ENCODE measurements at regions of chr17 and their contacts with region 1.

Region 1: GRCh38 chr17:50547035-50547735 is at the start of gene SPATA20:
- DNase-seq: peak; percentile 89 to 93
- ATAC-seq: peak; percentile 72 to 84
- H3K4me3 ChIP-seq: peak within 1 kb of the TSS; percentile 67
- H3K27ac ChIP-seq: peak within 1 kb of the TSS; percentile 95 to 98
- H3K4me1 ChIP-seq: peaks cover 50% of the 10 kb centered on the region
- CTCF ChIP-seq: peak; percentile 99
- EP300 ChIP-seq: no peak
- POLR2A ChIP-seq: peak; percentile 83
- RAD21 ChIP-seq: peak; percentile 99 to 100
- polyA plus RNA-seq, gene SPATA20: 34.4 and 48.5 TPM in 2 replicates

Region 2: DNA sequence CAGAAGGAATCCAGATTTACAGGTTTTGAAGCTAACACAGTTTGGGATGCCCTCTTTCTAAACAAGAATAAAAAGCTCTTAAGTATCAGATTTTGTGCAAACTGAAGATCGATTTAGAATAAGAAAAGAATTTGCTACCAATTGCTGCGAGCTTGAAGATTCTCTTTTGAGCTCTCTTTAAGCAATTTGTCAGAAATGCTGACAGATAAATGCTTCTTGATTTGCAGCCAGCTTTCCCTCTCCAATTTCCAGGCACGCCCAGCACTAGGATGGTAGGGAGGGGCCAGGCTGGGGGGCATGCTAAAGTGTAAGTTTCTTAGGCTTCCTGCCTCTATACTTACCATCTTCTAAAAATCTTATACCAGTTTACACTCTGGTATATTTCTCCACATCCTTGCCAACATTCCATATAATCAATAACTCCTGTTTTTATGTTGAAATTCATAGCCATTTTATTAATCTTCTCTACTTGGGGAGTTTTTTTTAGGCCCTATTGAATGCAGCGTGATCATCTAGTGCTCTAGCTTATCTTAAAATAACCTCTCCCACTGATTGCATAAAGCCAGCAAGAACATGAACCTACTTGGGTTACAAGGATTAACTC is 103.7 kb before region 1 on chr17:
- CTCF ChIA-PET with region 1: no interaction called
- POLR2A ChIA-PET with region 1: no interaction called
- DNase-seq: no peak
- ATAC-seq: no peak
- H3K4me3 ChIP-seq: no peak overlapping the region
- H3K27ac ChIP-seq: no peak overlapping the region
- H3K4me1 ChIP-seq: no peaks in the 10 kb centered on the region
- CTCF ChIP-seq: no peak
- EP300 ChIP-seq: no peak
- POLR2A ChIP-seq: no peak
- RAD21 ChIP-seq: no peak

Region 3: DNA sequence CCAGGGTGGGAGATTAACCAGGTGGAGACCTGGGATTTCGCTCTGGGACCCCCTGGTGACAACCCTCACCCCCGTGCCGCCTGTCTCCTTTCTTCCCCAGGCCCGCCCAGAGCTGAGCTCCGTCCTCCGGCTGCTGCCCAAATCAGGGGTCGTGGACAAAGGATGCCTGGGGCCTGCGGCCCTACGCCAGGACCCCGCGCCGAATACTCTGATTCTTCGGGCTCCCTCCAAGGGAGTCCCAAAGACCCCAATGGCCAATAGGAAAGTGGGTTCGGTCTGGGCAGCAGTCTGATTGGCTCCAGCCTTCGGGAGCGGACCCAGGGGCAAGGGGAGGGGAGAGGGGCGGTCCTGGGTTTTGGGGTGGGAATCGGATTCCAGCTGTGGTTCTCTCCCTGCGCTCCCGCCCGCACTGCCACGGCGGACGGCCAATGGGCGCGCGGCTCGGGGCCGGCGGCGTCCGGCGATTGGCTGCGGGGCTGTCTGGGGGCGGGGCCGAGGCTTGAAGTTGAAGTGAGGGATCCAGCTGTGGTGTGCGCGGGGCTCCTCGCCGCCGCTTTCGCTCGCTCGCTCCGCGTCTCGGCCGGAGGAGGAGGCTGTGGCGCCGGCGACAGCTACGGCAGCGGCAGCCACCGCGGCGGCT is 13.1 kb after region 1 on chr17 and contains the start of gene CACNA1G:
- CTCF ChIA-PET with region 1: interaction called, 83 read pairs
- POLR2A ChIA-PET with region 1: interaction called, 9 read pairs
- DNase-seq: peak; percentile 93 to 99
- ATAC-seq: peak; percentile 77 to 90
- H3K4me3 ChIP-seq: peak within 1 kb of the TSS; percentile 69
- H3K27ac ChIP-seq: peak within 1 kb of the TSS; percentile 75 to 88
- H3K4me1 ChIP-seq: peaks cover 37% of the 10 kb centered on the region
- CTCF ChIP-seq: no peak
- EP300 ChIP-seq: no peak
- POLR2A ChIP-seq: peak; percentile 49
- RAD21 ChIP-seq: no peak
- polyA plus RNA-seq, gene CACNA1G: 4.0 and 4.9 TPM in 2 replicates

Region 4: GRCh38 chr17:50638851-50639767 is 91.9 kb after region 1 on chr17:
- CTCF ChIA-PET with region 1: interaction called, 23 read pairs
- POLR2A ChIA-PET with region 1: interaction called, 17 read pairs
- DNase-seq: peak; percentile 96 to 100
- ATAC-seq: peak; percentile 77 to 80
- H3K4me3 ChIP-seq: peak overlapping the region; percentile 92; the same call in 1 of the 3 replicates
- H3K27ac ChIP-seq: peak overlapping the region; percentile 99 to 100
- H3K4me1 ChIP-seq: peaks cover 78% of the 10 kb centered on the region
- CTCF ChIP-seq: no peak
- EP300 ChIP-seq: peak; percentile 85 to 95
- POLR2A ChIP-seq: no peak; the same call in 1 of the 2 replicates
- RAD21 ChIP-seq: peak; percentile 32 to 55

Region 5: DNA sequence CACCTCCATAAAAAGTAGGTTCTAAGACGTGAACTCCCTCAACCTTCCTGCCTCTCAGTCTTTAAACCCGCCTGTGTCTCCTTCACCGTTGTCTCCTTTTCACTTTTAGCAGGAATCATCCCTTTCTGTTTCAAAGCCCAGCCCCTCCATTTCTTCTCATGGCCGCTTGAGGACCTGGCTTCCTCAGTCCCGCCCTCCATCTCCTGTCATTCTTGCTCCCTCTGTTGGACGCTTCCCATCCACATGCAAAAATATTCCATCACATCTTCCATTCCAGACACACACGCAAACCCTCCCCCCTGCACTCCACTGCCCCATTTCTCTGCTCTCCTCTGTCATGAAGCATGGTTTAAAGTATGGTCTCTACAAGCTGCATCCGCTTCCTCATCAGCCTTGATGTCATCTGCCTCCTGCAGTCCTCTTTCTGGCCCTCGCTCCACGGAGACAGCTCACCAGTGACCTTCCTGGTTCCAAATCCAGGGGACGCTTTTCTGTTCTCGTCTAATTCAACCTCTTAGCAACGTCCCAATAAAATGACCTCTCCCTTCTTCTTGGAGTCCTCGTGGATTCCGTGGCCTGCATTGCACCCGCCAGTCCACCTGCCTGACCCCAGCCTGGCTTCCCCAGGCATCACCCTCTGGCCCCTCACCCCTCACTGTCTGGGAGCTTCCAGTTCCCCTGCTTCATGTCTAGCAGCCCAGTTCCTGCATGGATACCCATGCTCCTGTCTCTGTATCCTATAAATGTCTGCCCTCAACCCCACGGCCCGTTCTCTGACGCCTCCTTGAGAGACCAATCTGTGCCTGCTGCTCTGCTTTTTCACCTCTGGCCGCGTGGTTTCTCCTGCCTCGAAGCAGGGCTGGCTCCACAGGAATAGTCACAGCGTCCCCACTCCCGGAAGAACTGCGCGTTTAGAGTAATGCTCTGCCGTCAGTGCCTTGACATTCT is 134.4 kb after region 1 on chr17:
- CTCF ChIA-PET with region 1: interaction called, 753 read pairs
- POLR2A ChIA-PET with region 1: no interaction called
- DNase-seq: peak; percentile 86 to 91
- ATAC-seq: peak; percentile 53 to 75
- H3K4me3 ChIP-seq: no peak overlapping the region
- H3K27ac ChIP-seq: peak overlapping the region; percentile 97 to 98
- H3K4me1 ChIP-seq: peaks cover 99% of the 10 kb centered on the region
- CTCF ChIP-seq: peak; percentile 66
- EP300 ChIP-seq: no peak
- POLR2A ChIP-seq: no peak
- RAD21 ChIP-seq: peak; percentile 81 to 94

Region 6: DNA sequence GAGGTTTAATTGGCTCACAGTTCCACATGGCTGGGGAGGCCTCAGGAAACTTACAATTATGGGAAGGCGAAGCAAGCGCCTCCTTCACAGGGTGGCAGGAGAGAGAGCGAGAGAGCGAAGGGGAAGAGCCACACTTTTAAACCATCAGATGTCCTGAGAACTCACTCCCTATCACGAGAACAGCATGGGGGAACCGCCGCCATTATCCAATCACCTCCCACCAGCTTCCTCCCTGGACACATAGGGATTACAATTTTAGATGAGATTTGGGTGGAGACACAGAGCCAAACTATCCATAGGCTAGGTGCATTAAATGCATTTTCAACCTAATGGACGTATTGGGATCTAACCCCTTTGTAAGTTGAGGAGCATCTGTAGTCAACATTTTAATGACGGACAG is 165.5 kb after region 1 on chr17:
- CTCF ChIA-PET with region 1: interaction called, 753 read pairs
- POLR2A ChIA-PET with region 1: no interaction called
- DNase-seq: no peak
- ATAC-seq: no peak
- H3K4me3 ChIP-seq: no peak overlapping the region
- H3K27ac ChIP-seq: no peak overlapping the region
- H3K4me1 ChIP-seq: peaks cover 16% of the 10 kb centered on the region
- CTCF ChIP-seq: no peak
- EP300 ChIP-seq: no peak
- POLR2A ChIP-seq: no peak
- RAD21 ChIP-seq: no peak

Region 7: DNA sequence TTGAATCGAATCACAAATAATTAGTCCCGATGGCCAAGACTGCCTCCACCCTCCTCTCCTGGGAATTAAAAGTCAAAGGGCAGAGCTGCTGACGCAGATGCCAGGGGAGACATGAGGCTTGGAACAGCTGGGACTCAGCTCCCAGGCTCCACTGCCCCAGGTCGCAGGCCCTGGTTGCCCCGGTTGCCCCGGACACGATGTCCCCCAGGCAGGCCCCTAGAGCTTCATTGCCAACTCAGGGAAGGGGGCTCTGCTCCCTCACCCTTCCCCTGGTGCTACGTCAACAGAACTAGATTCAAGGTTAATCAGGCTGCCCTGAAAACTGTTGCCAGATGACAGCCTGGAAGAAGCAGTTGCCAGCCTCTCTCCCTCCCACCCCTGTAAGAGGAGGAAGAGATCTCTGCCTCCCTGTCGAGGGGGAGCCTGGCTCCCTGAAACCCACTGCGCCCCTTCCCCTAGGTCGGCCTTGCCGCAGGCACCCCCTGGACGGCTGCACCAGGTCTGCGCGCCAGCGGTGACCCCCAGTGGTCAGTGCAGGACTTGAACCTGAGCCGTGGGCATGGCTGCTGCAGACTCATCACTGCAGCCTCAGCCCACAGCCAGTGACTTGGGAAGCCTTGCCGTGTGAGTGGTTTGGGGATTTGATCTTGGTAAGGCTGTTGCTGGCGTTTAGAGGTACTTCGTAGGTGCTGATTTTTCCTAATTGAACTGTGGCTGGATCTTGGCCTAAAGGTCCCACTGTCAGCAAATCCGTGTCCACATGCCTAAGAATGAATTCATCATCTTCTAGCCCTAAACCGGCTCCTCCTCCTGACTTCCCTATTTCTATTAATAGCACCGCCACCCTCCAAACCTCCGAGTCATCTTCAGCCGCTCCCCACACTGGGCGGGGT is 403.1 kb after region 1 on chr17:
- CTCF ChIA-PET with region 1: interaction called, 12 read pairs
- POLR2A ChIA-PET with region 1: no interaction called
- DNase-seq: peak; percentile 95 to 96
- ATAC-seq: peak; percentile 79 to 84
- H3K4me3 ChIP-seq: 0 out of 3 replicates have a peak overlapping the region, but pooled peaks have one; percentile 3
- H3K27ac ChIP-seq: peak overlapping the region; percentile 93 to 98
- H3K4me1 ChIP-seq: peaks cover 77% of the 10 kb centered on the region
- CTCF ChIP-seq: peak; percentile 99
- EP300 ChIP-seq: no peak
- POLR2A ChIP-seq: no peak
- RAD21 ChIP-seq: peak; percentile 100

Measured in A549 (cell line).